Right cardiac atrium (tissue), 5 donors: ENCODE measurements at regions of chr12 and their contacts with region 1.

Region 1: DNA sequence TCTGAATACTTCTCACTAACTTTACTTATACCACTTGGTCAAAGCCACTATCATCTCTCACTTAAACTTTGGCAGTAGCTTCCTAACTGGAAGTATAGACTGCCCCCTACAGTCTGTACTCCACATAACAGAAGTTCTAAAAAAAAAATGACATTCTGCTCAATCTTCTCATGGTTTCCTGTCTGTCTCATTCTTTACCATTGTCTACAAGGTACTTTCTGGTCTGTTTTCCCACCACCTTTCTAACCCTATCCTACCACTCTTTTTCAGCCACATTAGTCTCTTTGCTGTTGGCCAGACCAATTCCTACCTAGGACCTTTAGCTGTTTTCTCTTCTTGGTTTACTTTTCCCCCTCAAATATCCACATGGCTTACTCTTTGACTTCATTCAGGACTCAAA is 14.7 kb downstream of the CPSF6 start:
- DNase-seq: no peak
- ATAC-seq: peak in 1 of 2 donors; percentile 32
- H3K4me3 ChIP-seq: no peak overlapping the region
- H3K27ac ChIP-seq: no peak overlapping the region
- H3K4me1 ChIP-seq: no peaks in the 10 kb centered on the region
- H3K27me3 ChIP-seq: no peaks in the 10 kb centered on the region

Region 2: GRCh38 chr12:69136931-69137613 is 117.0 kb before region 1 on chr12:
- intact Hi-C with region 1: no loop called
- DNase-seq: no peak
- ATAC-seq: no peak
- H3K4me3 ChIP-seq: no peak overlapping the region
- H3K27ac ChIP-seq: no peak overlapping the region
- H3K4me1 ChIP-seq: no peaks in the 10 kb centered on the region
- H3K27me3 ChIP-seq: no peaks in the 10 kb centered on the region

Region 3: DNA sequence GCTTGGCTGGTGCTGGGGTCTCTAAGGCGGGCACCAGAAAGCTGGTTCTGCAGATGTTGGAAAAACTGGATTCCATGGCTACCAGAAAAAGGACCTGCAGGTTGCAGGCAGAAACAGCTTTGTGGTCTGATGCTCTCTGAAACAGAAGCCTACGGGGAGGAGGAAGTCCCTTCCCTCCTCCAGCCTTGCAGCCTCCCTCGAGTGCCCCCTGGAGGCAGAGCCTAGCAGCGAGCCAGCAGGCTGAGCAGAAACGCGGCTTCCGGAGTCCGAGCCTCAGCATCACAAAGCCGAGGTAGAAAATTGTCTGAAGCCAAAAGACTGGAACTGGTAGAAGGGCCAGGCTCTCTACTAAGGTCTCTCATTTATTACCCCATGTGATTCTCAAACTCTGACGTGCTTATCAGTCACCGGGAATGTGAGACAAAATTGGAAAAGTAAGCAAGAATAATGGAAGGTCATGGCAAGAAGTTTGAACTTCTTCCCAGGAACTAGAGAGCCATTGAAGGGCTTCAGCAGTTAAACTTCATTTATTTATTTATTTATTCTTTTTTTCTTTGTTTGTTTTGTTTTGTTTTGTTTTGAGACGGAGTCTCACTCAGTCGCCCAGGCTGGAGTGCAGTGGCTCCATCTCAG is 96.9 kb before region 1 on chr12:
- intact Hi-C with region 1: loop called (anchors 5 to 10 kb)
- DNase-seq: peak; percentile 85 to 94 (median 93)
- ATAC-seq: peak; percentile 86 to 92
- H3K4me3 ChIP-seq: no peak overlapping the region
- H3K27ac ChIP-seq: no peak overlapping the region
- H3K4me1 ChIP-seq: no peaks in the 10 kb centered on the region
- H3K27me3 ChIP-seq: no peaks in the 10 kb centered on the region

Region 4: GRCh38 chr12:69298947-69299346 is 44.9 kb after region 1 on chr12:
- intact Hi-C with region 1: no loop called
- DNase-seq: no peak
- ATAC-seq: no peak
- H3K4me3 ChIP-seq: no peak overlapping the region
- H3K27ac ChIP-seq: no peak overlapping the region
- H3K4me1 ChIP-seq: no peaks in the 10 kb centered on the region
- H3K27me3 ChIP-seq: no peaks in the 10 kb centered on the region

Region 5: GRCh38 chr12:69388371-69388770 is 134.3 kb after region 1 on chr12:
- intact Hi-C with region 1: no loop called
- DNase-seq: no peak
- ATAC-seq: no peak
- H3K4me3 ChIP-seq: no peak overlapping the region
- H3K27ac ChIP-seq: no peak overlapping the region
- H3K4me1 ChIP-seq: no peaks in the 10 kb centered on the region
- H3K27me3 ChIP-seq: no peaks in the 10 kb centered on the region